ENCODE measurements at regions of chr9 and their contacts with region 1.

Region 1: GRCh38 chr9:109320742-109321448 is at the start of gene EPB41L4B:
- DNase-seq: peak; percentile 81 to 95
- H3K4me3 ChIP-seq: peak within 1 kb of the TSS; percentile 60
- H3K27ac ChIP-seq: peak within 1 kb of the TSS; percentile 44
- H3K4me1 ChIP-seq: peaks cover 39% of the 10 kb centered on the region
- H3K27me3 ChIP-seq: no peaks in the 10 kb centered on the region
- CTCF ChIP-seq: peak; percentile 91
- total RNA-seq, gene EPB41L4B: 4.2 and 5.0 TPM in 2 replicates

Region 2: DNA sequence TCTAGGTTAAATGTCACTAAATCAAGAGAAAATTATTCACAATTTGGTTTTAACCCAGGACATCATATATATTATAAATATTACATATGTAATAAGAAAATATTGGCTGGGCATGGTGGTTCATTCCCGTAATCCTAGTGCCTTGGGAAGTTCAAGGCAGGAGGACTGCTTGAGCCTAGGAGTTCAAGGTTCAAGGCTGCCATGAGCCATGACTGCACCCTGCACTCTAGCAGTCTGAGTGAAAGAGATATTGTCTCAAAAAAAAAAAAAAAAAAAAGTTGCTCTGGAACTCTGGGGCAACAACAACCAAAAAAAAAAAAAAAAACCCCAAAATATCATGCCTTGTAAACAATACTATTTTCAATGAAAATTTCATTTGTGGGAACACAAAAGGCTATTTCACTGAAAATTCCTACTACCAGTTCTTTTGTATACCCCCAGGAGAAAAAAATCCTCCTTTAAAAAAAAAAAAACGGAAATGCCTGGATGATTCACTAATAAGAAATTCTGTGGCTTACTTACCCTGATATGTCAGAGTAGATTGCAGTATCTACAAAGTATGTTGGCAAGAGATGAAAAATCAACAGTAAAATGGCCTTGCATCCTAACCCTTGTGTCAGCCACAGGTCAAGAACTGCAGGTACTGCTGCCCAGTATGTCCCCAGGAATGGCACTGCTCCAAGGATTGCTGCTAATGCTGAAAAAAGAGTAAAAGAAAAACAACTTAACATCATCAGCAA is 285.0 kb before region 1 on chr9:
- CTCF ChIA-PET with region 1: no interaction called
- POLR2A ChIA-PET with region 1: interaction called, 3 read pairs
- intact Hi-C with region 1: loop called (anchors 10 kb)
- DNase-seq: peak; percentile 83 to 99
- H3K4me3 ChIP-seq: no peak overlapping the region
- H3K27ac ChIP-seq: peak overlapping the region; percentile 67
- H3K4me1 ChIP-seq: peaks cover 69% of the 10 kb centered on the region
- H3K27me3 ChIP-seq: no peaks in the 10 kb centered on the region
- CTCF ChIP-seq: no peak

Region 3: GRCh38 chr9:109119439-109120203 is 201.3 kb before region 1 on chr9 and contains the start of gene TMEM245:
- CTCF ChIA-PET with region 1: no interaction called
- POLR2A ChIA-PET with region 1: no interaction called
- intact Hi-C with region 1: loop called (anchors 5 kb)
- DNase-seq: peak; percentile 95 to 97
- H3K4me3 ChIP-seq: peak within 1 kb of the TSS; percentile 81
- H3K27ac ChIP-seq: peak within 1 kb of the TSS; percentile 38
- H3K4me1 ChIP-seq: peaks cover 35% of the 10 kb centered on the region
- H3K27me3 ChIP-seq: no peaks in the 10 kb centered on the region
- CTCF ChIP-seq: no peak
- total RNA-seq, gene TMEM245: 58.7 and 60.3 TPM in 2 replicates

Region 4: GRCh38 chr9:109251080-109251775 is 69.7 kb before region 1 on chr9:
- CTCF ChIA-PET with region 1: no interaction called
- POLR2A ChIA-PET with region 1: no interaction called
- intact Hi-C with region 1: loop called (anchors 2 kb)
- DNase-seq: peak; percentile 50 to 90
- H3K4me3 ChIP-seq: peak overlapping the region; percentile 33; the same call in 1 of the 2 replicates
- H3K27ac ChIP-seq: peak overlapping the region; percentile 95
- H3K4me1 ChIP-seq: peaks cover 79% of the 10 kb centered on the region
- H3K27me3 ChIP-seq: no peaks in the 10 kb centered on the region
- CTCF ChIP-seq: no peak

Region 5: DNA sequence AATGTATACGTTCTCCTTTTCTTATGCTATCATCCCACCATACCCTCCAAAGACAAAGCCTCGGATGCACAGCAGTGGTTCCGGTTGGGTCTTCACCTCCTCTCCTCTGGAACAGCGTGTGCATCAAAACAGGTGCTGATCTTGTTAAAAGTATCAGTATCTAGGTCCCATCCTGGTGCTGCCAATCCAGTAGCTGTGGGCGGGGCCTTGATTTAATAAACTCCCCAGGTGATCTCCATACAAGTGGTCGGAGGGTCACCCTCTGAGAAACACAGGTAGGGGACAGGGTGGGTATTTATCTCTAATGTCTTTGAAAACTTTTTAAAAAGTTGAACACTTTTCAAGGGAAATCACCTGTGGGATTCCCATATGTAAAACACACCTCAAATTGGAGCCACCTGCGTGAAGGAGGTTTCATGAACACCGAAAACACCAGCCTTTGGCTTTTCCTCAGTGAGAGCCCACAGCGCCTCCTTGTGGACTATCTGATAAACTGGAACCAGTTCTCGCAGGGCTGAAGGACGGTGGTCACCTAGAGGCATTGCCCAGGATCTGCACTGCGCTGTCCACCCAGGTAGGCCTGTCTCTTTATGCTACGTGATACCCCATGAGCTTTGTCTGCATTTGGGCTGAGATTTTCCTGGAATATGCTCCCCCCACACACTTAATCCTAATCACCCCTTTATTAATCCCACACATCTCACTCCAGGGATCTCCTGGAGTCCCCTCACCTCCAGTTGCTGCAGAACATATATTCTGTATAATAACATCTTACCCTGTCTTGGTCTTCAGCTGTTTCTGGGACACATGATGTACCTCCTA is 80.5 kb after region 1 on chr9:
- CTCF ChIA-PET with region 1: no interaction called
- POLR2A ChIA-PET with region 1: no interaction called
- intact Hi-C with region 1: loop called (anchors 2 kb)
- DNase-seq: peak; percentile 55 to 71
- H3K4me3 ChIP-seq: no peak overlapping the region
- H3K27ac ChIP-seq: no peak overlapping the region; the same call in 1 of the 2 replicates
- H3K4me1 ChIP-seq: no peaks in the 10 kb centered on the region
- H3K27me3 ChIP-seq: no peaks in the 10 kb centered on the region
- CTCF ChIP-seq: peak; percentile 89